CD4-positive, alpha-beta memory T cell (primary cell): ENCODE measurements at regions of chr2 and their contacts with region 1.

Region 1: GRCh38 chr2:197499594-197500526 is at the starts of genes HSPD1 and HSPE1:
- DNase-seq: peak; percentile 97 to 98 (median 98)
- H3K4me3 ChIP-seq: peak within 1 kb of the TSS; percentile 86 to 87
- H3K4me3 Mint-ChIP-seq: peak within 1 kb of the TSS; percentile 92 to 99 (median 96)
- H3K27ac ChIP-seq: peak within 1 kb of the TSS; percentile 77
- H3K27ac Mint-ChIP-seq: peak within 1 kb of the TSS; percentile 92 to 98 (median 97)
- H3K4me1 ChIP-seq: peaks cover 70% of the 10 kb centered on the region
- H3K4me1 Mint-ChIP-seq: peaks cover 41 to 77% (median 55%) of the 10 kb centered on the region in 4 donors
- H3K27me3 ChIP-seq: no peaks in the 10 kb centered on the region
- H3K27me3 Mint-ChIP-seq: no peaks in the 10 kb centered on the region
- total RNA-seq, gene HSPD1: 129 to 132 TPM
- total RNA-seq, gene HSPE1: 52.4 to 65.1 TPM

Region 2: DNA sequence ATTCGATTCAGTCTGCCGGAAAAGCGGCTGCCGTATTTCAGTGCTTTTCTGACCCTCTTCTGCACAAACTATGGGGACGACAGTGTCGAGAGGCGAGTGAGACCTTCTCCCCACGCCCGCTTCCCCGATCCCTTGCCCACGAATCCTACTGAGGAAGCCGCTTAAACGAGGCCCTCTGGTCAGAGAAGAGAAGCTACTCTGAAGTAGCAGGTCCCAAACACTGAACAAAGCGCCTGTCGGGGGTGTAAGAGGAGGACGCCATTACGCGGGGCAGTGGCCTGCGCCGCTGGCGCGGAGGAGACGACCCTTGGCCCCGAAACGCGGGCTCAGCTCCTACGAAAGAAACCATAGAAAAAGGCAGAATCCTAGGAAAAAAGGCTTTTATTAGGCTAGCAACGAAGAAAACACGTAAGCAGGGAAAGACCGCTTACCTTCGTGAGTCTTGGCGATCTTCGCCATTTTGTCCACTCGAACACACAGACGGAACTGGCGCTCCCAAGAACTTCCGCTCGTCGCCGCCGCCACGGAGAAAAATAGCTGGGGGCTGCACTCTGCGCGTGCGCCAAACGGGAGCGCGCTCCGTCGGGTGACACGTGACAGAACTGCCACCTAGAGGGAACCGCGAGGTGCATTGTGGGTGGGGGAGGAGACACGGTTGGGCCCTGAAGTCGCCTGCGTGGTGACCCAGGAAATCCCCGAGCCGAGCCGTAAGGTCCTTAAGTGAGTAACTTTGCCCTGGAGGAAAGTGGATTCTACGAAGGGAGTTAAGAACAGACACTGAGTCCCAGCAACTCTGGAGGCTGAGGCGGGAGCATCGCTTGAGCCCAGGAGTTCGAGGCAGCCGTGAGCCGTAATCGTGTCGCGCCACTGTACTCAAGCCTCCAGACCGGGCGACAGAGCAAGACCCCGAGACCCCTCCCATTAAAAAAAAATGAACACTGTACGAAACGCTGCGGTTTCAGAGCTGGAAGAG is 65.0 kb before region 1 on chr2 and contains the start of gene SF3B1:
- CTCF ChIA-PET with region 1: interaction called, 5 read pairs
- POLR2A ChIA-PET with region 1: interaction called, 93 read pairs
- intact Hi-C with region 1: loop called (anchors 1 kb)
- DNase-seq: peak; percentile 99 to 100 (median 99)
- H3K4me3 ChIP-seq: peak within 1 kb of the TSS; percentile 89 to 95
- H3K4me3 Mint-ChIP-seq: peak within 1 kb of the TSS; percentile 98 to 100 (median 100)
- H3K27ac ChIP-seq: peak within 1 kb of the TSS; percentile 99
- H3K27ac Mint-ChIP-seq: peak within 1 kb of the TSS; percentile 99 to 100 (median 100)
- H3K4me1 ChIP-seq: peaks cover 51% of the 10 kb centered on the region
- H3K4me1 Mint-ChIP-seq: peaks cover 36 to 65% (median 49%) of the 10 kb centered on the region in 4 donors
- H3K27me3 ChIP-seq: no peaks in the 10 kb centered on the region
- H3K27me3 Mint-ChIP-seq: no peaks in the 10 kb centered on the region
- total RNA-seq, gene SF3B1: 601 to 604 TPM

Region 3: GRCh38 chr2:197480165-197481036 is 19.5 kb before region 1 on chr2:
- CTCF ChIA-PET with region 1: no interaction called
- POLR2A ChIA-PET with region 1: interaction called, 11 read pairs
- intact Hi-C with region 1: no loop called
- DNase-seq: no peak
- H3K4me3 ChIP-seq: no peak overlapping the region
- H3K4me3 Mint-ChIP-seq: no peak overlapping the region
- H3K27ac ChIP-seq: no peak overlapping the region
- H3K27ac Mint-ChIP-seq: peak overlapping the region in 4 of 7 donors; percentile 19 to 81 (median 28)
- H3K4me1 ChIP-seq: no peaks in the 10 kb centered on the region
- H3K4me1 Mint-ChIP-seq: no peaks in the 10 kb centered on the region
- H3K27me3 ChIP-seq: no peaks in the 10 kb centered on the region
- H3K27me3 Mint-ChIP-seq: no peaks in the 10 kb centered on the region

Region 4: DNA sequence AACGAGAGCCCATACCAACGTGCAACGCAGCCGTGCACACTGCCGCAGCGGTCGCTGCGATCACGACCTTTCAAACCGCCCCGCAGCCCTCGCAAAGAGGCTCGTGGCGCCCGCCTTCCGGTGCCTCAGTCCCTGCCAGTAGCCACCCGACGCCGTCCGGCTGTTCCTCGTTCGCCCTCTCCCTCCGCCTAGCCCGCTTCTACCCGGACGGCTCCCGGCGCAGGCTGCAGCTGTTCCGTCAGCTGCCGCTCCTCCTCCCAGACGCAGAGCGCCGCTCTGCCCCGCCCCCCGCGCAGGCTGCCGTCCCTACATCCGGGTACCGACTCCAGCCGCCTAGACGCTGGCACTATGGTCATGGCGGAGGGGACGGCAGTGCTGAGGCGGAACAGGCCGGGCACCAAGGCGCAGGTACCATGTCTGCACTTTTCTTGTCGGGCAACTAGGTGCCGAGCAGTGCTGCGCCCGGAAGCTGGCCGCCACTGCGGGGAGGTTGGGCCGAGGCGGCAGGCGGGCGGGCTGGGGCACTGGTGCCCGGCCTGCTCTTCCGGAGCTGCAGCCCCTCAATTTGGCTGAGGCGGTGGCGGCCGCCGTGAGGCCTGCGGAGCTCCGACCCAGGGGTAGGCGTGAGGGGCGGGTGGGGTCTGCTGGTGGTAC is 16.0 kb after region 1 on chr2 and contains the start of gene MOB4:
- CTCF ChIA-PET with region 1: interaction called, 16 read pairs
- POLR2A ChIA-PET with region 1: interaction called, 180 read pairs
- intact Hi-C with region 1: loop called (anchors 1 kb)
- DNase-seq: peak; percentile 92 to 94 (median 93)
- H3K4me3 ChIP-seq: peak within 1 kb of the TSS; percentile 88 to 93
- H3K4me3 Mint-ChIP-seq: peak within 1 kb of the TSS; percentile 86 to 99 (median 94)
- H3K27ac ChIP-seq: peak within 1 kb of the TSS; percentile 95
- H3K27ac Mint-ChIP-seq: peak within 1 kb of the TSS; percentile 92 to 98 (median 97)
- H3K4me1 ChIP-seq: peaks cover 33% of the 10 kb centered on the region
- H3K4me1 Mint-ChIP-seq: peaks cover 18 to 59% (median 33%) of the 10 kb centered on the region in 4 donors
- H3K27me3 ChIP-seq: no peaks in the 10 kb centered on the region
- H3K27me3 Mint-ChIP-seq: no peaks in the 10 kb centered on the region
- total RNA-seq, gene MOB4: 20.2 to 21.8 TPM

Region 5: GRCh38 chr2:197777823-197778407 is 278.1 kb after region 1 on chr2:
- CTCF ChIA-PET with region 1: no interaction called
- POLR2A ChIA-PET with region 1: no interaction called
- intact Hi-C with region 1: loop called (anchors 10 kb)
- DNase-seq: peak in 4 of 5 donors; percentile 32 to 46 (median 40)
- H3K4me3 ChIP-seq: no peak overlapping the region
- H3K4me3 Mint-ChIP-seq: no peak overlapping the region
- H3K27ac ChIP-seq: no peak overlapping the region
- H3K27ac Mint-ChIP-seq: no peak overlapping the region
- H3K4me1 ChIP-seq: no peaks in the 10 kb centered on the region
- H3K4me1 Mint-ChIP-seq: peaks cover 0 to 2% (median 0%) of the 10 kb centered on the region in 4 donors
- H3K27me3 ChIP-seq: no peaks in the 10 kb centered on the region
- H3K27me3 Mint-ChIP-seq: peaks cover 4 to 5% of the 10 kb centered on the region in 2 donors

Region 6: DNA sequence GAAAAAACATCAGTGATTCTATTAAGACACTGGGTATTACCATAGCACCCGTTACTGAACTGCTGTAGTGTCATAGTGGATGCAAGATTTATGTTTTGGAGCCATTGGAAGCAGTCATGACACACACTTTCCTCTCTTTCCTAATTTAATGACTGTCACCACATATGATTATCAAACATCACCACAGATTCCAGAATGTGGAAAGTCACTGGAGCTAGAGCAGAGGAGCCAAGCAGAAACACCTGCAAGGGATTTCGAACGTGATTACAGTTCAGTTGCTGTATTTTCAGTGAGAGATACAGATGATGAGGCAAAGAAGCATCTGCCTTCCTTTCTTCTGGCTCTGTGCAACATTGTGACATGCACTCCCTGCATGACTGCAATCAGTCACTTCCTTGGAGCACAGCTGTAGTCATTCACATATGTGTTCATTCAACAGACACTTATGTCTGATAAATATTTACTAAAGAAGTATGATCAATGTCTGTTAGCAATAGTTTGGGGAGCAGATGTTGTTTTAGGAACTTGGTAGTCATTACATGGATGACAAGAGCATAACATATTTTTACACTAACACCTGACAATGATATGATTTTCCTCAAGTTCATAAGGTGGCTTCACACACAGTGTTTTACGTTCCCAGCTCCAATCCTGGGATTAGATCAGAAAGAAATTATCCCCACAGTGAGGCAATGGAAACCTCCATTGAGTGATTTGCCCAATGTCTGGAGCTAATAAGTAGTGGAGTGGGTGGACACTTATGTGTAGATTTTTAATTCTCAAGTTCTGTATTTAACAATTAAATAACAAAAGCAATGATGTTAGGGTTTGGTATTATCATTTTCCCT is 721.1 kb after region 1 on chr2:
- CTCF ChIA-PET with region 1: no interaction called
- POLR2A ChIA-PET with region 1: no interaction called
- intact Hi-C with region 1: no loop called
- DNase-seq: no peak
- H3K4me3 ChIP-seq: no peak overlapping the region
- H3K4me3 Mint-ChIP-seq: no peak overlapping the region
- H3K27ac ChIP-seq: no peak overlapping the region
- H3K27ac Mint-ChIP-seq: no peak overlapping the region
- H3K4me1 ChIP-seq: no peaks in the 10 kb centered on the region
- H3K4me1 Mint-ChIP-seq: no peaks in the 10 kb centered on the region
- H3K27me3 ChIP-seq: no peaks in the 10 kb centered on the region
- H3K27me3 Mint-ChIP-seq: peaks cover 0 to 6% of the 10 kb centered on the region in 2 donors